ENCODE measurements at regions of chr4 and their contacts with region 1.

Region 1: DNA sequence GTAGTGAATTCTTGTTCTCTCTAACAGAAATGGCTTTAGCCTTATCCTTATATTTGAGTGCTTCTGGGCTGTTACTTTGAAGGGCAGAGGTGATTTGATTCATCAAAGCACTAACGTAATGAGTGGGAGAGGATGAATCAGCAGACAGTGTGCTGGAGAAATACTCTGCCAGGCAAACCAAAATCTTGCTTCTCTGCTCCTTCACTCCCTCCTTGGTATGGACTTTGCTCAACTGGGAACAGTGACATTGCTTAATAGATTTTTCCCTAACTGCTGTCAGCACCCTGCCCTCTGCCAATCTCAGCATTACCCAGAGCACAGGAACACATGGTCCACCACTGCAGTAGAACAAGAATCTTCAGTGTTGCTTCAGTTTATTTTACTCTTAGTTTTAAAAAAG is 56.0 kb downstream of the PDLIM5 start:
- DNase-seq: no peak

Region 2: GRCh38 chr4:94406668-94407437 is 100.9 kb before region 1 on chr4:
- intact Hi-C with region 1: loop called (anchors 5 kb)
- DNase-seq: no peak

Region 3: DNA sequence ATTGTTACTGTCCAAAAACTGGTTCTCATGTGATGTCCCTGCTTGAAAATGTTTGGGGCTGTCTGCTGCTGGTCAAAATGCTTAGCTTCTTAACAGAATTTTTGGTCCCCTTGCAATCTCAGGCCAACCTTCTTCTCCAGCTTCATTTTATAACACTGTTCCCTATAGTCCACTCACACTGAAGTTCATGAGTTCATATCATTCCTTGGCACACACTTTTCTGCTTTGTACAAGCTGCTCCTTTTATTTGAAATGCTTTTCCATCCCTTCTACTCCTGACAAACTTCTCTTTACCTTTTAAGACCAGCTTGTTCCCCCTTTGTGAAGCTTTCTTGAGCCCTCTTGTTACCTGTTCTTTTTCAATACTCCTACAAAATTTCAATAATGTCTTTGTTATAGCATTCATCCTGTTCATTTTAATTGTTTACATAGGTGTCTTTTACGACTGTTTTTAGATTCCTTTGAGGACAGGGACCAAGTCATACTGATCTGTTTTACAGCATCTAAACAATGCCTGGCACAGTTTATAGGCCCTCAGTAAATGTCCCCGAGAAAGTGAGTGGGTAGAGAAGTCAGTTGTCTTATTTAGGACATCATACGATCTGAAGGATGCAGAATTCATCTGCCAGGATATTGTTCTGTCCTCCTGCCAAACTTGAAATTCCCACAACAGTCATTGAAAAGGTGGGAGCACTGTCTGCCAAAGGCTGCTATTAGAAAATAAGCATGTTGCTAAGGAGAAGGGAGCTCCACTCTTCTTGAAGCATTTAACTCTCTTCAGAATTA is 115.6 kb after region 1 on chr4:
- intact Hi-C with region 1: no loop called
- DNase-seq: no peak

Measured in cardiac septum (tissue), 1 donor.